Heart right ventricle (tissue), 16 donors: ENCODE measurements at regions of chrX and their contacts with region 1.

Region 1: DNA sequence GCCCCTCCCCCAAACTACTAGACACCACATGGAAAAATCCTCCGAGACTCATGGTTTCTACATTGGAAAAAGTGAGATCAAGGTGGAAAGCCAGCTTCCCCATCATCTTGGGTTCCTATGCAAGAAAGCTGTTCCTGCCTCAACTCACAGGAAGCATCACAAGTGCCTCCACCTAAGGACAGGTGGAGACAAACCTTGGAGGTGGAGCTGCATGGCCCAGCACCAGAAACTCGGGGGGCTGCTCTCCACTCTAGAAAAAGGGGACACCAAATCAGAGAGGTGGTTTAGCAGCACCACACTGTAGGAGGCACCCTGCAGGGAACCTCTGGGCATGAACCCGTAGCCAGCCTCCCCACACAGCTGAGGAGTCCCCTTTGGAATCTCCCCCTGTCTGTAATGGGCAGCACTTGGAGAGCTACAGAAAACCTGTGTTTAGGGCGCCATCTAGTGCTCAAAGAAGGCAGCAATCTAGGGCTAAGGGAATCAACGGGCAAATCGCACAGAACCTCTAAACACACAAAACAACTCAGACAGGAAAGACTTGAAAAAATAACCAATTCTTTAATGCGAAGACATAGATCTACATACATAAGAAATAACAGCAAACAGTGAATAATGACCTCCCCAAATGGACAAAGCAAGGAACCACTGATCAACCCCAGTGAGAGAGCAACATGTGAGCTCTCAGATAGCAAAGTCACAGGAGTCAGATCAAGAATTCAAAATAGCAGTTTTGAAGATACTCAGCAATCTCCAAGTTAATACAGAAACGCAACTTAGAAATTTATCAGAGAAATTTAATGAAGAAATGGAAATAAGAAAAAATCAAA is 37.0 kb upstream of the ZBTB33 start:
- DNase-seq: peak in 1 of 2 donors; percentile 45
- ATAC-seq: peak in 5 of 8 donors; percentile 57 to 79 (median 67)
- H3K4me3 ChIP-seq: no peak overlapping the region
- H3K27ac ChIP-seq: no peak overlapping the region
- H3K4me1 ChIP-seq: peaks cover 0 to 4% (median 0%) of the 10 kb centered on the region in 9 donors
- H3K27me3 ChIP-seq: peaks cover 0 to 19% (median 0%) of the 10 kb centered on the region in 7 donors
- CTCF ChIP-seq: peak; percentile 39 to 89 (median 72)

Region 2: DNA sequence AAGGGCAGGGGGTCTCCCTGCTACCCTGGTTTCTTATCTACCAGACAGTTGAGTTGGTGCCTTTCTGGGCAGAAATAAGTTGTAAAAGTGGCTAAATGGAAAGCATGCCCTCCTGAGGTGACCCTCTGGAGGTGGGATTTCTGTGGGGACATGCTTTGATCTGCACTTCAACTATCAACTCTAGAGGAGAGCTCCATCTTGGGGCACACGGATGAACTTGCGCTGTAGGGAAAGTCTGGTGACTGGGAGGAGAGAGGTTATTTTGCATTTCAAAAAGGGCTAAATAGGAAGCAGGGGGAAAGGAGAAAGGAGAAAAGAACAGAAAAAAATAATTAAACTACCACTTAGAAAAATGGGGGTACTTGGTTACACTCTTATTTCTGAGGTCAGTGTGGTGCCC is 123.4 kb before region 1 on chrX:
- intact Hi-C with region 1: loop called in 2 of 10 experiments (anchors 10 kb)
- DNase-seq: no peak
- ATAC-seq: no peak
- H3K4me3 ChIP-seq: no peak overlapping the region
- H3K27ac ChIP-seq: no peak overlapping the region
- H3K4me1 ChIP-seq: peaks cover 0 to 3% (median 0%) of the 10 kb centered on the region in 9 donors
- H3K27me3 ChIP-seq: peaks cover 0 to 9% (median 0%) of the 10 kb centered on the region in 7 donors
- CTCF ChIP-seq: no peak

Region 3: DNA sequence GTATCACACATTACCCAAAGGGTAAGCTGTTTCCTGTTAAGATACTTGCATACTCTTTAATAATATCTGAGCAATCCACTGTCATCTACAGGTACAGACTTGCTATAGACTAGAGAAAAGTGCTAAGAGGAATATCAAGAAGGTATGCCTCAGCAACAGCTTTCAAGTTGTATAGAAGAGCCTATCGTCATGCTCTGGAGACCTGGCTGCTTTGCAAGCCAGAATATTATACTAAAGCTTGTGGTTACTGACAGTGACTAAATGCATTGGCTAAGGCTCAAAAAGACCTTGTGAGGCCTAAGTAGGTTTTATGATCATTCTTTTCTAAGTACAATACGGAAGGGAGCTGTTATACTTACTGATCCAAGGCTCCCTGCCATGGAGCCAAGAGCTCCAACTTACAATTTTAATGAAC is 244.1 kb after region 1 on chrX:
- intact Hi-C with region 1: no loop called
- DNase-seq: no peak
- ATAC-seq: peak in 1 of 8 donors; percentile 22
- H3K4me3 ChIP-seq: no peak overlapping the region
- H3K27ac ChIP-seq: peak overlapping the region in 1 of 10 donors; percentile 60
- H3K4me1 ChIP-seq: peaks cover 0 to 45% (median 12%) of the 10 kb centered on the region in 9 donors
- H3K27me3 ChIP-seq: no peaks in the 10 kb centered on the region
- CTCF ChIP-seq: no peak